ENCODE measurements at regions of chr12 and their contacts with region 1.

Region 1: DNA sequence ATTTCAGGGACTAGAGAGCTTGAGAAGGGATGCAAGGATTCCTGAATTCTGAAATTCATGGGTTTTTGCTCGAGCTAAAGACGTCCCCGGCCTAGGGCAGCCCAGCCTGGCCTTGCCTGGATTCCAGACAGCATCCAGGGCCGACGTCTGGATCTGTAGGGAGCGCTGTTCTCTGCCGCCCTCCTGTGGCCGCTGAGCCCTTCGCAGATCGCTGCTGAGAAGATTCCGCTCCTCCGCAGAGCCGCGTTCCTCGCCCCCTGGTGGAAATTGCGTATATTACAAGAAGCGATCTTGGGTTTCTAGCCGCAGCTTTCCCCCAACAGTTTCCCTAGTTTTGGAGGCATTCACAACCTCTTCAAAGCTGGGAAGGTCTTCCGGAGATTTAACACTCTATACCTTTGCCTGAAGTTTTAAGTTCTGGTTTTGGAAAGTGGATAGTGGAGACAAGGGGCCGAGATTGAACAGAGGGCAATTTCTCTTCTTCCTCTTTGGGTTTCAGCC is 5.1 kb downstream of the CISTR start:
- H3K4me3 ChIP-seq: no peak overlapping the region
- H3K27ac ChIP-seq: no peak overlapping the region; the same call in 1 of the 2 replicates
- H3K4me1 ChIP-seq: peaks cover 4% of the 10 kb centered on the region
- CTCF ChIP-seq: peak; percentile 99

Region 2: GRCh38 chr12:53675651-53676453 is 70.8 kb before region 1 on chr12 and contains the start of gene ATP5MC2:
- CTCF ChIA-PET with region 1: interaction called, 11 read pairs
- POLR2A ChIA-PET with region 1: no interaction called
- H3K4me3 ChIP-seq: peak within 1 kb of the TSS; percentile 68
- H3K27ac ChIP-seq: peak within 1 kb of the TSS; percentile 90
- H3K4me1 ChIP-seq: 0 out of 2 replicates have a peak, but pooled peaks cover 7% of the 10 kb centered on the region
- CTCF ChIP-seq: peak; percentile 100

Region 3: DNA sequence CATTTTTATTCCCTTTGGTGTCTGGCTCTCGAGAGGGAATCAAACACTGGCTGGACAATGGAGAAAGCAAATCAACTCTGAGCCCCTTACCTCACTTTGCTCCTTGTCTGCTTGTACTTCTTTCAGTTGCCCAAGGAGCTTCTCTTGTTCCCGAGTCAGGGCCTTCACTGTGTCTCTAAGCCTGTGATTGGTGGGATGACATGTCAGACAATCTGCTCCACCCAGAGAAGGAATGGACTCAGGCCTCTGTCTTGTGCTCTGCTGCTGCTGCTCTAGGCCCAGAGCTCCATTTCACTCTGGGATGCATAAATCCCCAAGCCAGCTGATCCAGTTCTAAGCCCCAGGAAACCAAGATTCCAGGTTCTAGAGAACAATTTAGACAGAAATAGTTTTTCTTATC is 27.0 kb before region 1 on chr12:
- CTCF ChIA-PET with region 1: interaction called, 327 read pairs
- POLR2A ChIA-PET with region 1: interaction called, 3 read pairs
- H3K4me3 ChIP-seq: no peak overlapping the region
- H3K27ac ChIP-seq: no peak overlapping the region
- H3K4me1 ChIP-seq: no peaks in the 10 kb centered on the region
- CTCF ChIP-seq: no peak

Region 4: DNA sequence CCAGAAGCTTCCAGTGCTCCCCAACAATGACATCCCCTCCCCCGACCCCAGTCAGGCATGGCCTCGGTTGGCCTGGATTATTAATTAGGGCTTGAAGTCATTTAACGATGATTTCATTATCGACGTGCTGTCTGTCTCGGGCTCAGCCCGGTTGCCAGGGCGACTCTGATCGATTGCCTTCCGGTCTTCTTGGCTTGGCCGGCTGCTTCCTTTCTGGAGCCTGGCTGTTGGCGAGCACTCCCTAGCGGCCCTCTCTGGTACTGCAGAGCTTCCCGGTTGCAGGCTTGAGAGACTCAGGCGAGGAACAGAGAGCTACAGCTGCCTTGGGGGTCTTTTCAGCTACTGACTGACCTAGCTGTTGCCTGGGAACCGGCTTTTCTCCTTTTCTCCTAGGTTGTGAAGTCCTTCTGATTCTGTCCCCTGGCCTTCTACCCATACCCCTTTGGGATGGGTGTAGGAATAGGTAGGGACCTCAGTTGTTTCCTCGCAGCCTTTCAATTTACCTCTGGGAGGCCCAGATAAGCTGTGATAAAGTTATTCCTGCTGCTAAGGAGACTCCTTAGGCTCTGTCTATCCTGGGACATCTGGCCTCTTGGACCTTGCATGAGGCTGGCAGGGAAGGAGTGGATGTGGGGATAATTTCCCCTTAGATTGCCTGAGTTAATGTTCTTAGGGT is 10.6 kb after region 1 on chr12:
- CTCF ChIA-PET with region 1: interaction called, 172 read pairs
- POLR2A ChIA-PET with region 1: interaction called, 3 read pairs
- H3K4me3 ChIP-seq: peak overlapping the region; percentile 12
- H3K27ac ChIP-seq: no peak overlapping the region
- H3K4me1 ChIP-seq: peaks cover 16% of the 10 kb centered on the region
- CTCF ChIP-seq: peak; percentile 66

Region 5: GRCh38 chr12:53806721-53807120 is 60.1 kb after region 1 on chr12:
- CTCF ChIA-PET with region 1: interaction called, 14 read pairs
- POLR2A ChIA-PET with region 1: no interaction called
- H3K4me3 ChIP-seq: no peak overlapping the region
- H3K27ac ChIP-seq: peak overlapping the region; percentile 37; the same call in 1 of the 2 replicates
- H3K4me1 ChIP-seq: peaks cover 19% of the 10 kb centered on the region
- CTCF ChIP-seq: no peak

Region 6: GRCh38 chr12:53924521-53925405 is 178.1 kb after region 1 on chr12:
- CTCF ChIA-PET with region 1: no interaction called
- POLR2A ChIA-PET with region 1: no interaction called
- H3K4me3 ChIP-seq: no peak overlapping the region
- H3K27ac ChIP-seq: no peak overlapping the region
- H3K4me1 ChIP-seq: peaks cover 7% of the 10 kb centered on the region; the same call in 1 of the 2 replicates
- CTCF ChIP-seq: no peak

Region 7: DNA sequence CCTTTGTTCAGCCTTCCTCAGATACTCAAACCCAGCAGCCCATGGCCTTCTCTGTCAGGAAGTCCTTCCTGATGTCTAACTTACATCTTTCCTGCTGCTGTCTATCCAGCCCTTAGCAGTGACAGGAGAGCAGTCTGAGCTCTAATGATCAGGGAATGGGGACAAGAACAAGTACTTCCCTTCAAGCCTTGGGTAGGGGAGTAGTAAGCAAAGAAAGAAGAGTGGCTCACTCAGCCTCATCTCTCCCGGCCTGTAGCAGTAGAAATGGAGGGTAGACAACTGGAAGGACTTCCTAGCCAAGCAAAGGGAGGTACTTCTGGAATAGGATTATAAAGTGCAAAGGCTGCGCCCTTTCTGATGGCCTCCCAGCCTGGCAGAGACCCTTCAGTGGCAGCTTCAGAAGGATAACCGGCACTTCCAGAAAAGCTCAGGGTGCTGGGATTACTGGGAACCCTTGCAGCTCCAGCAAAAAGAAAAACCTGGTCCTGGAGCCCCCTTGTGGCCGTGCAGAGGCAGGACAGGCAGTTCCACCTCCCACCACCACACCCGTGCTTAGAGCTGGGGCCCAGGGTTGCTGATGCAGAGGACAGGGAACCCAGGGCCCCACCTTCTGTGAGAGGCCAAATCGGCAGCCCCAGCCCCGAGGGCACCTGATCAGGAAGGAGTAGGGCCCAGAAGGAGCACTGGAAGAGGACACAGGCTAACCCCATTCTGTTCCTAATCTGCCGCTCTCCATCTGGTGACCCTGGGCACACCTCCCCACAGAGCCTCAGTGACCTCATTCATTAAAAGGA is 454.6 kb after region 1 on chr12:
- CTCF ChIA-PET with region 1: interaction called, 11 read pairs
- POLR2A ChIA-PET with region 1: no interaction called
- H3K4me3 ChIP-seq: no peak overlapping the region
- H3K27ac ChIP-seq: no peak overlapping the region
- H3K4me1 ChIP-seq: peaks cover 10% of the 10 kb centered on the region
- CTCF ChIP-seq: peak; percentile 94